Dorsolateral prefrontal cortex (tissue), 120 donors: ENCODE measurements at regions of chr4 and their contacts with region 1.

Region 1: DNA sequence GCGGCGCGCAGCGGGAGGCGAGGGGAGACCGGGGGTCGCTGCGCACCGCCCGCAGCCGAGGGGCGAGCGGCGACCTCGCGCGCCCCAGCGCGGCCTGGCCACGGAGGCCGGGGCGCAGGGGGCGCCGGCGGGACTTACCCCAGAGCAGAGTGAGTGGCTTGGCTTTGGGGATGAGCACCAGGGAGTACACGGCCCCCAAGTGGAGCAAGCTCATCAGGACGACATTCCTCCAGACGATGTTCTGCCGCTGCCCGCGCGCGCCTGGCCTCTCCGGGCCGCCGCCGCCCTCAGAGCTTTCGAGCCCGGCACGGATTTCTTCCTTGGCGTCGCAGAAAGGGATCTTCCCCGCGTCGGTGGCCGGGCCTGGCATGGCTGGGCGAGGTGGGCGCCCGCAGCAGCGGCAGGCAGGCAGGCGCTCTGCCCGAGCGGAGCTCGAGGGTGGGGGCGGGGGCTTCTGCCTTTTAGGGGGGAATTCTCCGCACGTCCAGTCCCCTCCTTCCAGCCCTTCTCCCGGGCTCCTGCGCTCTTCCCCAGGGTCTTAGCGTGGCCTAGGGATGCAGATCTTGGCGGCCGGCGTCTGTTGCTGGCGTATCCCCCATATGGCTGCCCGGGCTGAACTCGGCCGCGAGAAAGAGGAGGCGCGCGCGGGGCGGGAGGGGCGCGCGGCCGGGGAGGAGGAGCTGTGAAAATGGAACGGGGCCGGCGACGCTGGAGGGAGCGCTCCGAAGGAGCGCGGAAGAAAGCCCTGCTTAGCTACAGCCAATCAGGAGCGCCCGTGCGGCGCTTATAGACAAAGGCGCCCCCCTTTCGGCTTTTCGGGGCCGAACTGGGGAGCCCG is at the start of gene SCD5:
- DNase-seq: peak; percentile 76 to 93 (median 88)
- H3K4me3 ChIP-seq: peak within 1 kb of the TSS; percentile 49 to 94 (median 86)
- H3K27ac ChIP-seq: peak within 1 kb of the TSS; percentile 71 to 97 (median 92)
- H3K27me3 ChIP-seq: no peaks in the 10 kb centered on the region
- CTCF ChIP-seq: peak in 35 of 56 donors; percentile 10 to 57 (median 36)
- total RNA-seq, gene SCD5: 191 to 439 (median 289) TPM

Region 2: GRCh38 chr4:82561745-82562515 is 236.5 kb before region 1 on chr4 and contains the start of gene TMEM150C:
- intact Hi-C with region 1: loop called in 1 of 2 experiments (anchors 10 kb)
- DNase-seq: peak in 5 of 10 donors; percentile 26 to 59 (median 37)
- H3K4me3 ChIP-seq: peak within 1 kb of the TSS; percentile 54 to 84 (median 76)
- H3K27ac ChIP-seq: peak within 1 kb of the TSS in 33 of 59 donors; percentile 1 to 75 (median 48)
- H3K27me3 ChIP-seq: no peaks in the 10 kb centered on the region
- CTCF ChIP-seq: peak in 49 of 56 donors; percentile 8 to 64 (median 33)
- total RNA-seq, gene TMEM150C: 15.7 to 49.1 (median 28.1) TPM

Region 3: DNA sequence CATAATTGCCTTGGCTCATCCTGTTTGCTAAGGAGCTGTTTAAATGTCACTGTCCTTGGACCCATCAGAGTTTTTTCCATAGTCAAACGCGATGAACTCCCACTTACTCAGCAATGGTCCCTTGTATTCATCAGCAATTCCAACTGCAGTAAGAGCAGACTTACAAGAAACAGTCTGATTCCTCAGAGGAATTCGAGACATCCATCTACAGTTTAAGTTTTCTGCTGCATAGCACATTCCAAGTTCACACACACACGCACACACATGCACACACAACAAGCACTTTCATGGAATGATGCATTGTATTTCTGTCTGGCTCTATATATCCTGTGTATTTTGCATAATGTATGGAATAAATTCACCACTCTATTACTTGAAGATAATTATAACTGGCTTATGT is 203.9 kb before region 1 on chr4:
- intact Hi-C with region 1: no loop called
- DNase-seq: no peak
- H3K4me3 ChIP-seq: no peak overlapping the region
- H3K27ac ChIP-seq: no peak overlapping the region
- H3K27me3 ChIP-seq: no peaks in the 10 kb centered on the region
- CTCF ChIP-seq: no peak

Region 4: GRCh38 chr4:82721819-82722423 is 76.5 kb before region 1 on chr4:
- intact Hi-C with region 1: no loop called
- DNase-seq: peak in 9 of 10 donors; percentile 34 to 73 (median 59)
- H3K4me3 ChIP-seq: peak overlapping the region in 1 of 59 donors; percentile 11
- H3K27ac ChIP-seq: peak overlapping the region in 52 of 59 donors; percentile 1 to 84 (median 59)
- H3K27me3 ChIP-seq: no peaks in the 10 kb centered on the region
- CTCF ChIP-seq: peak in 55 of 56 donors; percentile 30 to 78 (median 62)

Region 5: DNA sequence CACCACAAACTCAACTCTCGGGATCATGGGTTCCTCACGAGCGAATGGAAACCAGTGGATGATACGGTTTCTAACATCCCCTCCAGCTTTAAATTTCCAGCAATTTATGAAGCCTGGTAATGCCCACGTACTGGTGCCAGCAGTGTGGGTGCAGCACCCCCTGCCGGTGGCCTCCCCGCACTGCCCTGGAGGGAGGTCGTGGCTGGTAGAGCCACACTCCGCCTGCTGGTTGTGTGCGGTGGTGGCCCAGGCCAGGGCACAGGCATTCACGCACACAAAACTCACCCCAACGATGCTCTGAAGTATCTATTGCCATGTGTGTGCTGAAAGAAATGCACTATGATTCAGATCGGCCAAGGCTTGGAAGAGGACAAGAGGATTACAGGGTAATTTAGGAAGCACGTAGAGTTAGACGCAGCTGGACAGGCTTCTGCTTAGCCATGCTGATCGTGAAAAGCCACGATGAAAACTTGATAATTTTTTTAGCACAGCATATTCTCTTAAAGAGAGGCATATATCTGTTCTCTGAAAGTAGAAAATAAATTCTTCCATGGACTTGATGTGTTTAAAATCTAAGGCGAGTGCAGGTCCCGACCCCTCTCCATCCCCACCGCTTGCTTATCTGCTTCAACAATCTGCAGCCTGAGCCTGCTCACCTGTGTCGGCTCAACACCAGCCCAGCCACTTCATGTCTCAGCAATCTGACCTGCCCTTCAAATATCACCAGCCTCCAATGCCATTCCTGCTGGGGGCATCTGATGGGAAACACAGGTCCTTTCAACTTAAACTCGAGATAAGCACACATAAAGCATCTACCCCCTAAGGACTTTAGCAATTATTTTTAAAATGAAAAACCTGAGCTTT is 58.8 kb before region 1 on chr4:
- intact Hi-C with region 1: loop called in 1 of 2 experiments (anchors 10 kb)
- DNase-seq: peak in 9 of 10 donors; percentile 50 to 81 (median 75)
- H3K4me3 ChIP-seq: peak overlapping the region in 1 of 59 donors; percentile 2
- H3K27ac ChIP-seq: peak overlapping the region in 56 of 59 donors; percentile 9 to 94 (median 75)
- H3K27me3 ChIP-seq: no peaks in the 10 kb centered on the region
- CTCF ChIP-seq: peak; percentile 40 to 100 (median 94)

Region 6: GRCh38 chr4:82770607-82771006 is 27.8 kb before region 1 on chr4:
- intact Hi-C with region 1: loop called in 1 of 2 experiments (anchors 2 kb)
- DNase-seq: peak in 9 of 10 donors; percentile 55 to 91 (median 63)
- H3K4me3 ChIP-seq: peak overlapping the region in 15 of 59 donors; percentile 1 to 47 (median 22)
- H3K27ac ChIP-seq: peak overlapping the region; percentile 58 to 98 (median 93)
- H3K27me3 ChIP-seq: no peaks in the 10 kb centered on the region
- CTCF ChIP-seq: peak in 7 of 56 donors; percentile 13 to 29 (median 20)